GM10248 (cell line): ENCODE measurements at regions of chr4 and their contacts with region 1.

Region 1: DNA sequence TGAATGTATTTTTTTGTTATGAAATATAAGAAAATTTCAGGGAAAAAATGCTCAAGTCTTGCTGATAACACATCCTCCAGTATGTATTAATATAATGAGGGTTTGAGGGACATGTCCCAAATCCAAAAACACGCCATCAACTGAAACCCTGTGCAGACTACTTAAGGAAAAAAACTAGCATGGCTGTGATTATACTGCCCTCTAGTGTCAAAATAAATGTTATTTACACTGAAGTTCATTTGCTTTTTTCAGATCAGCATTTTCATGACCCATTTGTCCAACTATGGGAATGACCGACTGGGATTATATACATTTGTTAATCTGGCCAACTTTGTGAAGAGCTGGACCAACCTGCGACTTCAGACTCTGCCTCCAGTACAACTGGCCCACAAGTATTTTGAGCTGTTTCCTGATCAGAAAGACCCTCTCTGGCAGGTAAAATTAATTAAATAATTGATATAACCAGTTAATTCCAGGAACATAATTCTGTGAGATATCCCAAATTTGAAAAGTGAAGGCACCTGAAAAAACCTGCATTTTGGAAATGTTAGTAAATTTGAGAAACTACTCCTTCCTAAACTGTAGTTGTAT is 128.5 kb downstream of the PRSS12 start:
- DNase-seq: peak; percentile 15
- CTCF ChIP-seq: peak; percentile 63

Region 2: GRCh38 chr4:118213101-118213500 is 11.2 kb before region 1 on chr4:
- CTCF ChIA-PET with region 1: interaction called, 16 read pairs
- POLR2A ChIA-PET with region 1: no interaction called
- DNase-seq: no peak
- CTCF ChIP-seq: no peak

Region 3: GRCh38 chr4:118235566-118236120 is 11.3 kb after region 1 on chr4:
- CTCF ChIA-PET with region 1: interaction called, 25 read pairs
- POLR2A ChIA-PET with region 1: no interaction called
- DNase-seq: no peak
- CTCF ChIP-seq: no peak